Gastrocnemius medialis (tissue), 4 donors: ENCODE measurements at regions of chr10 and their contacts with region 1.

Region 1: DNA sequence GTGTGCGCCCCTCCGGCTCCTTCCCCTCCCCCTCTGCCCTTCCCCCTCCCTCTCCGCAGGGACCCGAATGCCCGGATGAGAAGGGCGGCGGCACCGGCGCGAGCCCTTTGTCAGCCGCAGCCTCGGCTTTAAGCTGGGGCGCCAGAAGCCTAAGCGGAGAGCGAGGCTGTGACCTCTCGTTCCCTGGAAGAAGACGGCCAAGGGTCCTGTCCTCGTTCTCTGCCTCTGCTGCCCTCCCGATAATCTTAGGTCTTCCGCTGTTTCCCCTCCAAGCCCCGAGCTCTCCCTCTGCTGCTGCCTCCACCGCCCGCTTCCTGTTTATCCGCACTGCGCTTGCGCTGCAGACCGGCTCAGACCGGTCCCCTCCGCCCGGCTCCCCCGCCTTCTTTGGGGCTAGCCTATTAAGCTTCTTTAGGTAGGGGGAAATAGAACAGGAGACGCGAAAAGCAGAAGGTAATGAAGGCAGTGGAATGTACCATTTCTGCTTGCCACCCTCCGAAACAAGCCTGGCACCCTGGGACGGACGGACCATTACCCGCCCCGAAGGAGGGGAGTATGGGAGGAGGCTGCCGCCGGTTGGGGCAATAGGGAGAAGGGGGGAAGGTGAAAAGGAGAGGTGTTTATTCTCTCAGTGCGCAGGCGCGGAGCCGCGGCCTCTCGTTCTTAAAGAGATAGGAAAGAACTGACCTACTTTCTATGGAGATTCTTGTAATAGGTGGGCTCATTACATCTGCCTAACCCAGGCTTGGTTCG is at the start of gene OGA:
- DNase-seq: peak; percentile 99 to 100
- ATAC-seq: peak; percentile 89 to 90
- H3K4me3 ChIP-seq: peak within 1 kb of the TSS; percentile 82 to 99 (median 98)
- H3K27ac ChIP-seq: peak within 1 kb of the TSS; percentile 93 to 100 (median 96)
- H3K4me1 ChIP-seq: peaks cover 31% of the 10 kb centered on the region in 2 donors
- H3K27me3 ChIP-seq: no peaks in the 10 kb centered on the region
- CTCF ChIP-seq: peak in 1 of 5 experiments; percentile 26
- POLR2A ChIP-seq: peak; percentile 99 to 100
- total RNA-seq, gene OGA: 25.8 to 85.5 (median 48.3) TPM

Region 2: DNA sequence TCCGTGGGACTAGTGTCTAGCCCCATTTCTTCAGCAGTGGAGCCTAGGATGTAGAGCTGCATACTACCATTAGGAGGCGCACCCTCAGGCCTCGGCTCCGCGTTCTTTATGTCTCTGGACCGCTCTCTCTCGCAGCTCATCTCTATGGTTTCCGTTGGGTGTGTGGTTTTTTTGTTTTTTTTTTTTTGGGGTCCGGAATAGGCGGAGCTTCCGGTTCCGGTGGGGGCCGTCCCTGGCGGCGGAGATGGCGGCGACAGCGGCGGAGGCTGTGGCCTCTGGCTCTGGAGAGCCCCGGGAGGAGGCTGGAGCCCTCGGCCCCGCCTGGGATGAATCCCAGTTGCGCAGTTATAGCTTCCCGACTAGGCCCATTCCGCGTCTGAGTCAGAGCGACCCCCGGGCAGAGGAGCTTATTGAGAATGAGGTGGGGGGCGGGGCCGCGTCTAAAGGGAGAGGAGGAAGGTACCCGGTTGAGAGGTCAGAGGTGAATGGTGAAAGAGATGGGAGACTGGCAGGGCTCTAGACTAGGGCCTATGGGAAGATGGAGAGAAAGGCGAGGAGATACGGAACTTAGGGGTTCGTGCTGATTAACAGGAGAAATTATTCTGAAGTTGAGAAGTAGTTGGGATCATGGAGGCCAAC is 1282.5 kb before region 1 on chr10 and contains the start of gene HIF1AN:
- in situ Hi-C with region 1: no loop called
- intact Hi-C with region 1: loop called (anchors 10 kb)
- DNase-seq: peak; percentile 81 to 91
- ATAC-seq: peak; percentile 97 to 98
- H3K4me3 ChIP-seq: peak within 1 kb of the TSS; percentile 71 to 99 (median 88)
- H3K27ac ChIP-seq: peak within 1 kb of the TSS; percentile 76 to 86 (median 82)
- H3K4me1 ChIP-seq: peaks cover 20 to 31% of the 10 kb centered on the region in 2 donors
- H3K27me3 ChIP-seq: no peaks in the 10 kb centered on the region
- CTCF ChIP-seq: peak; percentile 71 to 96 (median 83)
- POLR2A ChIP-seq: peak; percentile 67 to 81
- total RNA-seq, gene HIF1AN: 21.6 to 25.7 (median 24.0) TPM

Region 3: DNA sequence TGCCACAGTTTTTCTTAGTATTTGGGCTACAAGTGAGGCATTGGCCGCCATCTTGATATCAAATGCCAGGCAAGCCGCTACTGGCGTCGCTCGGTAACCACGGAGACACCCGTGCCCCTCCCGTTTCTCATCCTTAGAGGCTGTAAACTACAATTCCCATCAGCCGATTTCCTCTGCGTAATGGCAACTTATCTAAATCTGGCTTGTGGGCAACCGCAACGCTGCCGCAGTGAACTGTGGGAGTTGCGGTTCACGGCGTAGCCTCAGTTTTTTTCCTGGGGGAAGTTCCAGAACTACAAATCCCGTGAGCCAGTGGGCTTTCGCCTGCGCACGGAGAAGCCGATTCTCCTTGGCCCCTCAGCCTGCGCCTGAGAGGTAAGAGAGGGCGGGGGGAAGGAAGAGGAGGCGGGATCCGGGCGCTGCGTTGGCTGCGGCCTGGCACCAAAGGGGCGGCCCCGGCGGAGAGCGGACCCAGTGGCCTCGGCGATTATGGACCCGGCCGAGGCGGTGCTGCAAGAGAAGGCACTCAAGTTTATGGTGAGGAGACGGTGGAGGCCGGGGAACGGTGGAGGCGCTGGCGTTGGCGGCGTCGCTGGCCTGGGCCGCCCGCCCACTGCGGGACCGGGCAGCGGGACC is 464.5 kb before region 1 on chr10 and contains the start of gene BTRC:
- in situ Hi-C with region 1: no loop called
- intact Hi-C with region 1: loop called (anchors 10 kb)
- DNase-seq: peak; percentile 97 to 98
- ATAC-seq: peak; percentile 97 to 98
- H3K4me3 ChIP-seq: peak within 1 kb of the TSS; percentile 87 to 98 (median 94)
- H3K27ac ChIP-seq: peak within 1 kb of the TSS; percentile 82 to 96 (median 90)
- H3K4me1 ChIP-seq: peaks cover 18 to 29% of the 10 kb centered on the region in 2 donors
- H3K27me3 ChIP-seq: no peaks in the 10 kb centered on the region
- CTCF ChIP-seq: no peak
- POLR2A ChIP-seq: peak; percentile 69 to 78
- total RNA-seq, gene BTRC: 8.7 to 17.3 (median 12.6) TPM

Region 4: GRCh38 chr10:101629837-101630632 is 188.3 kb before region 1 on chr10:
- in situ Hi-C with region 1: no loop called
- intact Hi-C with region 1: no loop called
- DNase-seq: peak; percentile 42 to 75
- ATAC-seq: peak; percentile 76
- H3K4me3 ChIP-seq: no peak overlapping the region
- H3K27ac ChIP-seq: no peak overlapping the region
- H3K4me1 ChIP-seq: peaks cover 15 to 17% of the 10 kb centered on the region in 2 donors
- H3K27me3 ChIP-seq: no peaks in the 10 kb centered on the region
- CTCF ChIP-seq: no peak
- POLR2A ChIP-seq: no peak

Region 5: DNA sequence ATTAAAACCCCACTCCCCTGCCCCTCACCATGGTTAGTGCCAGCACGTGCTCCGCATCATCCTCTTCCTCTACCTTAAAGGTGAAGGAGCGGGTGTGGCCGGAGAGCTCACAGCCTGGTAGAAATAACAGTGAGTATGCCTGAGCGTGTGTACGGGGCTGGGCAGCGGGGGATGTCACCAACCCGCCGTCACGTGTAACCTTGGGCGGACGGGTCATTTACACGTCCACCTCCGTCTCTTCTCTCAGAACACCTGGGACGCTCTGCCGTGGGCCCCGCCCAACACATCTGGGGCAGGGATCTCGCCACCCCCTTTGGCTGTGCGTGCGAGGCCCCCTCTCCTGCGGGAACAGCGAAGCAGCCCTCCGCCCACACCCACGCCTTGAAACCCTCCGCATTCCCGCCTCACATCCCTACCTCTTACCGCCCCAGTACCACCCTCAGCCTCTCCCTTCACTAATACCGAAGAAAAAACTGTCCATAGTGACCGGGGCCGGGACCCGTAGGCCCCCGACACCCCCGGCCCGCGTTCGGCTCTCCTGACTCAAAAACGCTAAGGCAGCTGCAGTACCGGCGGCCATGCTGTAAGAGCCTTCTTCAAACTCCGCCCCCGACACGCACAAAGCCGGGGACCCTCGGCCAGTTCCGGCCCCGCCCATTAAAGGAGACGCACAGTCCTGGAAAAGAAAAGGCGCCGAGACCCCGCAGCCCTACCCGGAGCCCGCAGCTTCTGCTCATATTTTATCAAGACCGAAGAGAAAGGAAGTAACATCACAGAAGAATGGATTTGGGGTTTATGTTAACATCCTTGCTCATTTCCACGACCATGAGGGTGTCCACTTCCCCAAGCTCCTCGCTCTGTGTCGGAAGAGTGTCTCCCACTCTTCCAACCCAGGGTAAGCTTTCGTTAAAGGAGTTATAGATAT is 35.2 kb before region 1 on chr10 and contains the start of gene NPM3:
- in situ Hi-C with region 1: no loop called
- intact Hi-C with region 1: loop called (anchors 2 kb)
- DNase-seq: peak; percentile 68 to 73
- ATAC-seq: peak; percentile 67 to 77
- H3K4me3 ChIP-seq: peak within 1 kb of the TSS; percentile 68 to 85 (median 76)
- H3K27ac ChIP-seq: peak within 1 kb of the TSS; percentile 14 to 76 (median 65)
- H3K4me1 ChIP-seq: peaks cover 23 to 31% of the 10 kb centered on the region in 2 donors
- H3K27me3 ChIP-seq: peaks cover 13 to 18% (median 16%) of the 10 kb centered on the region in 3 donors
- CTCF ChIP-seq: no peak
- POLR2A ChIP-seq: peak in 1 of 2 donors; percentile 14
- total RNA-seq, gene NPM3: 12.9 to 37.0 (median 16.0) TPM

Region 6: DNA sequence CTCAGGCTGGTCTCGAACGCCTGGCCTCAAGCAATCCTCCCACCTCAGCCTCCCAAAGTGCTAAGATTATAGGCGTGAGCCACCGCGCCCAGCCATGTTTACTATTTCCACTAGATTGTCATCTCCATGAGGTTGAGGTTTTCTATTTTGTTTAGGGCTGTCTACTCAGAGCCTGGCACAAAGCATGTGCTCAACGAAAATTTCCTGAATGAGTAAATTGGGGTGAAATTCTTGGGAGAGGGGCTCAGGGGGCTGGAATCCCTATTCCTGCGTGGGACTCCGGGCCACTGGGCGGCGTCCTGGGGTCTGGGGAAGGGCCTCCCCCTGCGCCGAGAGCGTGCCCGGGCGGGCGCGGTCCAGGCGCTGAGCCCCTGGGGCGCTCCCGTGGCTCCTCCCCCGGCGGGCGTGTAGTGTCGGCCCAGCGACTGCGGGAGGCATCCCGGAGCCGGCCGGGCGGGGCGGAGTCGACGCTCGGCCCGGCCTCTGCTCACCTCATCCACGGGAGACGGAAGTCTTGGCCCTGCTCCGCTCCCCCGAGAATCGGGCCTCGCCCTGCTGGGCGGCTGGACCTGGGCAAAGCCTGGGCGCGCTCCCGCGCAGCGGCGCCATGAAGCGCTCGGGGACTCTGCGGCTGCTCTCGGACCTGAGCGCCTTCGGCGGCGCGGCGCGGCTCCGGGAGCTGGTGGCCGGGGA is 246.7 kb after region 1 on chr10 and contains the start of gene HPS6:
- in situ Hi-C with region 1: no loop called
- intact Hi-C with region 1: loop called (anchors 1 kb)
- DNase-seq: peak; percentile 79 to 85
- ATAC-seq: peak; percentile 91 to 94
- H3K4me3 ChIP-seq: peak within 1 kb of the TSS; percentile 66 to 95 (median 85)
- H3K27ac ChIP-seq: peak within 1 kb of the TSS; percentile 81 to 96 (median 96)
- H3K4me1 ChIP-seq: peaks cover 31 to 39% of the 10 kb centered on the region in 2 donors
- H3K27me3 ChIP-seq: no peaks in the 10 kb centered on the region
- CTCF ChIP-seq: peak in 2 of 5 experiments; percentile 17 to 21
- POLR2A ChIP-seq: peak; percentile 62 to 77
- total RNA-seq, gene HPS6: 12.7 to 21.8 (median 19.4) TPM

Region 7: GRCh38 chr10:102114861-102115618 is 296.7 kb after region 1 on chr10:
- in situ Hi-C with region 1: no loop called
- intact Hi-C with region 1: loop called (anchors 5 kb)
- DNase-seq: peak; percentile 79 to 81
- ATAC-seq: peak; percentile 61 to 73
- H3K4me3 ChIP-seq: peak overlapping the region; percentile 57 to 69 (median 64)
- H3K27ac ChIP-seq: peak overlapping the region; percentile 76 to 100 (median 94)
- H3K4me1 ChIP-seq: peaks cover 68% of the 10 kb centered on the region in 2 donors
- H3K27me3 ChIP-seq: no peaks in the 10 kb centered on the region
- CTCF ChIP-seq: no peak
- POLR2A ChIP-seq: peak; percentile 41 to 47

Region 8: DNA sequence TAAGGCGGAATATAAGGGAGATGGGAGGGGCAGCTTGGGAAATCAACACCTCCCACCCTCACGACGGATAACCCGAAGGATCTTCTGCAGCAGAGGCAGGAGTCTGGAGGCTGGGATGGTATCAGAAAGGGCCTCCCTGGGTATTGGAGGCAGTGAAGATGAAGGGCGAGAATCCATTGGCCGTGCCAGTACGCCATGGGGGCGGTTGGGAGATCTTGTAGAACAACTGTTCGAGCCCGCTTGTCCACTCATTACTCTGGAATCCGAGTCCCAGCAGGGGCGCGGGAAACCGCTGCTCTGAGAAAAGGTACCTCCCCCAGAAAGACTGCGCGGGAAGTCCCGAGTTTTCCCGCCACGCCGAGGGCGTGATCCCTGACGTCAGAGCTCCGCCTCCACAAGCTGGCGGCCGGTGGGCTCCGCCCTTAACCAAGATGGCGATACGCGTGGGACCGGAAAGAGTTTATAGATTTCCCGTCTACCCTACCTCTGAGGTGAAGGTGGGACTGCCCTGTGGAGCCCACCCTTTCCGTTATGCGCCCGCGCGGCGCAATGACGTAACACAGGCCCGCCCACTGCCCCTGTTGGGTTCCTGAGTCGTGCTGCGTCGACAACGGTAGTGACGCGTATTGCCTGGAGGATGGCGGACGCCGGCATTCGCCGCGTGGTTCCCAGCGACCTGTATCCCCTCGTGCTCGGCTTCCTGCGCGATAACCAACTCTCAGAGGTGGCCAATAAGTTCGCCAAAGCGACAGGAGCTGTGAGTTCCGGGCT is 333.7 kb after region 1 on chr10 and contains the start of gene NOLC1:
- in situ Hi-C with region 1: no loop called
- intact Hi-C with region 1: loop called (anchors 1 kb)
- DNase-seq: peak; percentile 96 to 99
- ATAC-seq: peak; percentile 98 to 99
- H3K4me3 ChIP-seq: peak within 1 kb of the TSS; percentile 75 to 99 (median 92)
- H3K27ac ChIP-seq: peak within 1 kb of the TSS; percentile 82 to 97 (median 94)
- H3K4me1 ChIP-seq: peaks cover 12 to 16% of the 10 kb centered on the region in 2 donors
- H3K27me3 ChIP-seq: no peaks in the 10 kb centered on the region
- CTCF ChIP-seq: peak in 1 of 5 experiments; percentile 24
- POLR2A ChIP-seq: peak; percentile 84 to 90
- total RNA-seq, gene NOLC1: 37.2 to 76.7 (median 71.1) TPM